CD4-positive, alpha-beta T cell (primary cell): ENCODE measurements at regions of chr13 and their contacts with region 1.

Region 1: DNA sequence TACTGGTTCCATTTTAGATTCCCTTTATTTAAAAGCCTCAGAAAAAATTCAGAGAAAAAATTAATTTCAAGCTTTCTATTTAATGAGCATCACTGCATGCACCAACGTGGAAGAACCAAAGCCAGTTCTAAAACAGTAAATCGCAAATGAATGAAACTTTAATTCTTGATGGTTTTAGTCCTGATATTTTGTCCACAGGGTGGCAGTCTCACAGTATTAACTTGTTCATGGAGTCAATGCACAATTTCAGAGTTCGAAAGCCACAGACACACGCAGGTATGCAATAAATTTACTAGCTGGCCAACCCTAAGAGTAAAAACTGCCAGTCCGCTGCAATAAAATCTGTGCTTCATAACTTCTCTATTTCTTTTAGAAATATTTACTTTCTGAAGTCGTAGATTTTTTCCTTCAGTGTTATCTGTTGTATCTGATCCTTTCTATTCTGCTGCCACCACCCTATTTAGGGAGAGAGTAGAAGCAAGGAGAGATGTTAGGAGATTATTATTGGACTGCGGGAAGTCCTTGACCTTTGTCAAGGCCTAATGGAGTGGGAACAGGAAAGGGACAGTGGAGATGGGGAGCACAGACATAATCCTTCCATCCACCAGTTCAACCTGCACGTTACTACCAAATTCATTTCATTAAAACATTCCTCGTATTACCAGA is 7.0 kb upstream of the WBP4 start:
- DNase-seq: peak in 10 of 14 experiments; percentile 5 to 80 (median 24)
- ATAC-seq: peak; percentile 77
- H3K4me3 ChIP-seq: no peak overlapping the region
- H3K4me3 Mint-ChIP-seq: peak overlapping the region; percentile 39
- H3K27ac ChIP-seq: no peak overlapping the region
- H3K27ac Mint-ChIP-seq: peak overlapping the region; percentile 56
- H3K4me1 ChIP-seq: peaks cover 16% of the 10 kb centered on the region
- H3K4me1 Mint-ChIP-seq: peaks cover 57% of the 10 kb centered on the region
- H3K27me3 ChIP-seq: no peaks in the 10 kb centered on the region
- H3K27me3 Mint-ChIP-seq: no peaks in the 10 kb centered on the region
- CTCF ChIP-seq: peak; percentile 76

Region 2: GRCh38 chr13:40922437-40923040 is 131.8 kb before region 1 on chr13:
- CTCF ChIA-PET with region 1: interaction called, 10 read pairs
- POLR2A ChIA-PET with region 1: interaction called, 3 read pairs
- intact Hi-C with region 1: loop called in 1 of 2 experiments (anchors 5 kb)
- DNase-seq: peak in 2 of 14 experiments; percentile 9 to 37
- ATAC-seq: no peak
- H3K4me3 ChIP-seq: no peak overlapping the region
- H3K4me3 Mint-ChIP-seq: peak overlapping the region; percentile 80
- H3K27ac ChIP-seq: no peak overlapping the region
- H3K27ac Mint-ChIP-seq: peak overlapping the region; percentile 42
- H3K4me1 ChIP-seq: peaks cover 15% of the 10 kb centered on the region
- H3K4me1 Mint-ChIP-seq: peaks cover 25% of the 10 kb centered on the region
- H3K27me3 ChIP-seq: no peaks in the 10 kb centered on the region
- H3K27me3 Mint-ChIP-seq: no peaks in the 10 kb centered on the region
- CTCF ChIP-seq: no peak

Region 3: DNA sequence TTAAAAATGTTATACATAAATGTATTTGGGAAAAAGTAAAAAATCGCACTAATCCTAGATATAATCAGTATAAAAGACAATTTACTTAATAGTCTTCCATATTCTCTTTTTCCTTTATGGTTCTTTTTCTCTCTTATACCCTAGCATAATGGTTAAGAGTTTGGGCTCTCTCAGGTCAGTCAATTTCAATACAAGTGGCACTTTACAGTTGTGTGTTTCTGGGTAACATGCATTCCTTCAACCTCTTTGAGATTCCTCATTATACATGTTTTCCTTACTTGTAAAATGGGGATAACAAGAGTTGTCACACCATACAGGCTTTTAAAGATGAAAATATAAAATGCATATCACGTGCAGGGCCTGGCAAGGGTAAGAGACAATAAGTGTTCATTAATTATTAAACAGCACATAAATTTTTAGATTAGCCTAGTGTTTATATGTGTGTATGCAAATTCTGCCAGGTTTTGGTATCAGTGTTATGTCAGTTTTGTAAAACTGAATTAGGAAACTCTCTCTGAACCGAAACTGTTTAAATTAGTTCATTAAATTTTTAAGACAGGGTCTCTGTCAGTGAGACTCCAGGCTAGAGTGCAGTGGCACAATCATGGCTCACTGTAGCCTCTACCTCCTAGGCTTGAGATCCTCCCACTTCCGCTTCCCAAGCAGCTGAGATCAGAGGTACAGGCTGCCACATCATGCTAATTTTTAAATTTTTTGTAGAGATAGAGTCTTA is 85.0 kb before region 1 on chr13:
- CTCF ChIA-PET with region 1: interaction called, 20 read pairs
- POLR2A ChIA-PET with region 1: interaction called, 18 read pairs
- intact Hi-C with region 1: loop called in 1 of 2 experiments (anchors 1 kb)
- DNase-seq: peak in 7 of 14 experiments; percentile 9 to 62 (median 48)
- ATAC-seq: peak; percentile 63
- H3K4me3 ChIP-seq: no peak overlapping the region
- H3K4me3 Mint-ChIP-seq: peak overlapping the region; percentile 71
- H3K27ac ChIP-seq: no peak overlapping the region
- H3K27ac Mint-ChIP-seq: peak overlapping the region; percentile 34
- H3K4me1 ChIP-seq: peaks cover 44% of the 10 kb centered on the region
- H3K4me1 Mint-ChIP-seq: peaks cover 98% of the 10 kb centered on the region
- H3K27me3 ChIP-seq: no peaks in the 10 kb centered on the region
- H3K27me3 Mint-ChIP-seq: no peaks in the 10 kb centered on the region
- CTCF ChIP-seq: no peak

Region 4: DNA sequence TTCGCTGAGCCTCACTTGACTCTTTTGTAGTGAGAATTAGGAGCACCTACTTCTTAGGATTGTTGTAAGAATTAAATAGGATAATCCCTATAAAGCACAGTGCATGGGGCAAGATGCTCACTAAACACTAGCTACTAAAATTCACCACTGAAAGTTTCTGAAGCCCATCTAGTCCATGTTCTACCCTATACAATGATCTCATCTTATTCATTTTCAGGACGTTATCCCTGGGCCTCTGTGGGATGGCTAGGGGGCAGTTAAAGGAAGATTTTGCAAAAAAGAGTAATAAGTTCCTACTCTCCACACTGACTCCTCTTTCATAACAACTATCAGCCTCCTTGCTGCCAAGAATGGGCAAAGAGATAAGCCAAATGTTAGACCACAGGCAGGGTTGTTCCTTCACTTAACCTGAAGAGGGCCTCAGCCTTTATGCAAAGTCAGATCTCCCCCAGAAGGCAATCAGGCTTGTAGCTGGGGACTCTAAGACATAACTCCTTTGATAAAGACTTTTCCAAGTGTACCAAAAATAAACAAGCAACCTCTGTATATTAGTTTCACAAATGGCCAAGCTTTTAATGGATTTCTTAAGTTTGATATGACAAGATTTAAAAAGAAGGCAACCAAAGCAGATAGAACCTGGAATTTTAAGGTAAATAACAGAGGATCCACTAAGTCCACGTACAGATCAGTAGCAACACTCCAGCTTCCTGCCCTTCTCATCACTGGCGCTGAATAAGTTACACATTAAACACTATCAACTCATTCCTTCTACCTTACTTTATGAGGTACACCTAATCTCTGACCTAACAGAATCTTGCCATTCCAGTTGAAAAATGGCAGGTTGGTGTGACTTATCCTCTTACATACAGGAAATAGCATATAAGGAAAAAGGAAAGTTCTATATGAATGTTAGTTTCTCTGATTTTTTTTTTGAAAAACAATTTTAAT is 79.6 kb before region 1 on chr13:
- CTCF ChIA-PET with region 1: interaction called, 20 read pairs
- POLR2A ChIA-PET with region 1: interaction called, 18 read pairs
- intact Hi-C with region 1: loop called (anchors 1 to 2 kb)
- DNase-seq: peak in 8 of 14 experiments; percentile 17 to 81 (median 32)
- ATAC-seq: peak; percentile 85
- H3K4me3 ChIP-seq: no peak overlapping the region
- H3K4me3 Mint-ChIP-seq: peak overlapping the region; percentile 77
- H3K27ac ChIP-seq: peak overlapping the region in 1 of 2 donors; percentile 46
- H3K27ac Mint-ChIP-seq: peak overlapping the region; percentile 92
- H3K4me1 ChIP-seq: peaks cover 37% of the 10 kb centered on the region
- H3K4me1 Mint-ChIP-seq: peaks cover 94% of the 10 kb centered on the region
- H3K27me3 ChIP-seq: no peaks in the 10 kb centered on the region
- H3K27me3 Mint-ChIP-seq: no peaks in the 10 kb centered on the region
- CTCF ChIP-seq: peak; percentile 70

Region 5: DNA sequence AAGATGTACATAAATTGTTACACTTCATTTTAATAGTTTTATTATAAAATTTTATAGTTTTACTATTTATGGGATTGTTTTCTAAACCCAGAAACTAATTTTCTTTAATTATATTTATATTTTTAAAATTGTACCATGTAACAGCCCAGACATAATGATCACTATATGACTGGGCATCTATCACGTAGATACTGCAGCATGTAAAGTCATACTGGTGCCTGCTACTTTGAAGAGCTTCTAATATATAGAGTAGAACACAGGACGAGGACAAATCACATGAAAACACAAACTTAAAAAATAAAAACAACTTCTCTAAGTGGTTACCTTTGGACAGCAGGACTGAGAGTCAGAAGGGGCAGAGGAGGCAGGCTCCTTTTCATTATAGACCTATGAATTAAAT is 40.5 kb before region 1 on chr13:
- CTCF ChIA-PET with region 1: interaction called, 19 read pairs
- POLR2A ChIA-PET with region 1: interaction called, 103 read pairs
- intact Hi-C with region 1: no loop called
- DNase-seq: no peak
- ATAC-seq: no peak
- H3K4me3 ChIP-seq: peak overlapping the region; percentile 52
- H3K4me3 Mint-ChIP-seq: peak overlapping the region; percentile 92
- H3K27ac ChIP-seq: peak overlapping the region in 1 of 2 donors; percentile 10
- H3K27ac Mint-ChIP-seq: peak overlapping the region; percentile 94
- H3K4me1 ChIP-seq: peaks cover 21% of the 10 kb centered on the region
- H3K4me1 Mint-ChIP-seq: peaks cover 69% of the 10 kb centered on the region
- H3K27me3 ChIP-seq: no peaks in the 10 kb centered on the region
- H3K27me3 Mint-ChIP-seq: no peaks in the 10 kb centered on the region
- CTCF ChIP-seq: no peak

Region 6: DNA sequence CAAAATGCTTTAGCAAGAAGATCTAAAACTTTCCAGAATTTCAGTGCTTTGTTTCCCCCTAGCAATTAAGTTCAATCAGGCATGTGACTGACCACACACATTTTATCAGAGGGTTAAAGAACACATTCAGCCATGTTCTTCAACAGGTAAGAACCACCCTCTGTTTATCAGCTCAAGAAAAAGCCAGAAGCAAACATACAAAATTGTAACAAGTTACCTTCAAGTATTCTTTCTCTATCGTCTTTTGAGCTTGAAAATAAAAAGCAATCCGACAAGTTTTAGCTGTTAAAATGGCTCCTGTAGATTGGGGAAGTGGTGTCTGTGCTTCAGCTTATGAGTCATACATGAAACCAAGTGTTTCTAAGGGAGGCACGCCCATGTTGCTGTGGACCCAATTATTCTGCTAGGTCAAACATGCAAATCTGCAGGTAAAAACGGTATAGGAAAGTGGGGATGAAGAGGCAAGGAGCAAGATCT is 35.3 kb before region 1 on chr13 and contains the start of gene ELF1:
- CTCF ChIA-PET with region 1: interaction called, 19 read pairs
- POLR2A ChIA-PET with region 1: interaction called, 103 read pairs
- intact Hi-C with region 1: loop called in 1 of 2 experiments (anchors 2 kb)
- DNase-seq: peak in 13 of 14 experiments; percentile 39 to 89 (median 53)
- ATAC-seq: peak; percentile 89
- H3K4me3 ChIP-seq: peak within 1 kb of the TSS; percentile 68
- H3K4me3 Mint-ChIP-seq: peak within 1 kb of the TSS; percentile 94
- H3K27ac ChIP-seq: peak within 1 kb of the TSS; percentile 77 to 85
- H3K27ac Mint-ChIP-seq: peak within 1 kb of the TSS; percentile 94
- H3K4me1 ChIP-seq: no peaks in the 10 kb centered on the region
- H3K4me1 Mint-ChIP-seq: peaks cover 49% of the 10 kb centered on the region
- H3K27me3 ChIP-seq: no peaks in the 10 kb centered on the region
- H3K27me3 Mint-ChIP-seq: no peaks in the 10 kb centered on the region
- CTCF ChIP-seq: no peak
- total RNA-seq, gene ELF1: 354 to 358 TPM

Region 7: GRCh38 chr13:41222259-41222852 is 168.0 kb after region 1 on chr13:
- CTCF ChIA-PET with region 1: interaction called, 7 read pairs
- POLR2A ChIA-PET with region 1: no interaction called
- intact Hi-C with region 1: loop called in 1 of 2 experiments (anchors 5 kb)
- DNase-seq: peak in 13 of 14 experiments; percentile 27 to 74 (median 38)
- ATAC-seq: peak; percentile 91
- H3K4me3 ChIP-seq: no peak overlapping the region
- H3K4me3 Mint-ChIP-seq: no peak overlapping the region
- H3K27ac ChIP-seq: no peak overlapping the region
- H3K27ac Mint-ChIP-seq: no peak overlapping the region
- H3K4me1 ChIP-seq: no peaks in the 10 kb centered on the region
- H3K4me1 Mint-ChIP-seq: no peaks in the 10 kb centered on the region
- H3K27me3 ChIP-seq: no peaks in the 10 kb centered on the region
- H3K27me3 Mint-ChIP-seq: no peaks in the 10 kb centered on the region
- CTCF ChIP-seq: peak; percentile 82